WTC11 (cell line): ENCODE measurements at regions of chr12 and their contacts with region 1.

Region 1: GRCh38 chr12:5648692-5649359 is 216.9 kb downstream of the NTF3 start:
- DNase-seq: peak; percentile 48
- ATAC-seq: peak; percentile 99
- H3K4me3 Mint-ChIP-seq: no peak overlapping the region
- H3K27ac Mint-ChIP-seq: no peak overlapping the region; the same call in 1 of the 2 replicates
- H3K4me1 Mint-ChIP-seq: peaks cover 11% of the 10 kb centered on the region
- H3K27me3 Mint-ChIP-seq: no peaks in the 10 kb centered on the region
- CTCF ChIP-seq: peak; percentile 34

Region 2: DNA sequence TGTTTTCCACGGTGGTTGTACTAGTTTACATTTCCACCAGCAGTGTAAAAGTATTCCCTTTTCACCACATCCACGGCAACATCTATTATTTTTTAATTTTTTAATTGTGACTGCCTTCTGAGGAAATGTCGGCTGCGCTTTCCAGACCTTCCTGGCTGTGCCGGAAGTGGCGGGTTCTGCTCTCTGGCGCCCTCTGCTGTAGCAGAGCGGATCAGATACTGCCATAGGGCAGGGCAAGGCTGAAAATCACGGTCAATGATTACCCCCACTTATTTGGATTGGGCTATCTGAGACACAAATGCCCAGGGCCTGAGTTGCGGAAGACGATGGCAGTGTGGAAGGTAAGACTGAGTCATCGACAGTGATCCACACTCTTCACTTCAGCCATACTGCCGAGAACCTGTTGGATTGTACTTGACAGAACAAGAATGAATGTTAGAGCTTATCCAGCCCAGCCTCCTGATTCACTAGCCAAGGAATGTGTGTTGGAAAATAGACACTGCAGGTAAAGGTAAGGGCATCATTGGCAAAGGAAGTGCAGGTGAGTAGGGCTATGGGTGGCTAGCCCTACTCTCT is 92.7 kb before region 1 on chr12:
- CTCF ChIA-PET with region 1: interaction called, 12 read pairs
- POLR2A ChIA-PET with region 1: no interaction called
- DNase-seq: peak; percentile 73
- ATAC-seq: peak; percentile 87
- H3K4me3 Mint-ChIP-seq: no peak overlapping the region
- H3K27ac Mint-ChIP-seq: no peak overlapping the region
- H3K4me1 Mint-ChIP-seq: peaks cover 32% of the 10 kb centered on the region
- H3K27me3 Mint-ChIP-seq: no peaks in the 10 kb centered on the region
- CTCF ChIP-seq: peak; percentile 89

Region 3: DNA sequence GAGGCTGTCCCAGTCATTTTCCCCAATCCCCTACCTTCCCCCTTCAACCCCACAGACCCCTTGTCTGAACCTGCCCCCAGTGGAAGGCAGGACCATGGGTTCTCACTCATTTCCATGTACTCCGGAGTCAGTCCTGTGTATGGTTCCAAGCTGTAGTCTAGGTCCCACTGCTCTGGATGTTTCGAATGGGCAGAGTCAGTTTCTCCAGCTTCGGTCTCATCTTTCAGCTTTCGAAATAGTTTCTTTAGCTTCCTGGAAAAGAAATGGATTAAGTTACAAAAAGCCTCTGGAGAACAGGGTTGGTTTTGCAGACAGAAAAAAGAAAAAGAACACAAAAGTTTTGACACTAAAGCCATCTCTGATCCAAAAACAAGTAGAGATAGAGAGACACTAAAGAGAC is 49.4 kb before region 1 on chr12:
- CTCF ChIA-PET with region 1: no interaction called
- POLR2A ChIA-PET with region 1: no interaction called
- DNase-seq: no peak
- ATAC-seq: no peak
- H3K4me3 Mint-ChIP-seq: no peak overlapping the region
- H3K27ac Mint-ChIP-seq: no peak overlapping the region
- H3K4me1 Mint-ChIP-seq: no peaks in the 10 kb centered on the region
- H3K27me3 Mint-ChIP-seq: no peaks in the 10 kb centered on the region
- CTCF ChIP-seq: no peak

Region 4: DNA sequence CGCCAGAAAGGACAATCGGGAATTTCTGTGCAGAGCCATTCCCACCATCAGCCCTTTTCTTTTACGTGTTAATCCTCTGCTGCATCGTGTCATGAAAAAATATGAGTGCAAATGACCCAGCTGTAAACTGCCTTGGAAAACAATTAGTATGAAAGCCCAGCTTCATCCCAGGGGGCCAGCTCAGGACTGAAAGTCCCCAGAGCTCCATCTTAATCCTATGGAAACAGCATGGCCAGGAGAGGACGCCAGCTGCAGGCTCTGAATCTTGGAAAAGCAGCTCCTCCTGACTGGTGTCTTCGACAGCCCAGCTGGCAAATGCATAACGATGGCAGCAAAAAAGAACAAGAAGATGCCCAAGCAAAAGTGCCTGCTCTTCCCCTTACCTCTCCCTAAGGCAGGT is 25.4 kb before region 1 on chr12:
- CTCF ChIA-PET with region 1: interaction called, 10 read pairs
- POLR2A ChIA-PET with region 1: no interaction called
- DNase-seq: no peak
- ATAC-seq: no peak
- H3K4me3 Mint-ChIP-seq: no peak overlapping the region
- H3K27ac Mint-ChIP-seq: no peak overlapping the region
- H3K4me1 Mint-ChIP-seq: peaks cover 9% of the 10 kb centered on the region
- H3K27me3 Mint-ChIP-seq: no peaks in the 10 kb centered on the region
- CTCF ChIP-seq: no peak

Region 5: GRCh38 chr12:5661811-5662210 is 13.0 kb after region 1 on chr12:
- CTCF ChIA-PET with region 1: interaction called, 11 read pairs
- POLR2A ChIA-PET with region 1: no interaction called
- DNase-seq: no peak
- ATAC-seq: no peak
- H3K4me3 Mint-ChIP-seq: no peak overlapping the region
- H3K27ac Mint-ChIP-seq: no peak overlapping the region
- H3K4me1 Mint-ChIP-seq: no peaks in the 10 kb centered on the region
- H3K27me3 Mint-ChIP-seq: peaks cover 5% of the 10 kb centered on the region; the same call in 1 of the 2 replicates
- CTCF ChIP-seq: no peak